MCF 10A (cell line): ENCODE measurements at regions of chr13 and their contacts with region 1.

Region 1: GRCh38 chr13:113816946-113817859 is 46.7 kb downstream of the GAS6 start:
- DNase-seq: peak; percentile 86
- H3K4me3 Mint-ChIP-seq: no peak overlapping the region
- H3K27ac Mint-ChIP-seq: no peak overlapping the region
- H3K4me1 Mint-ChIP-seq: peaks cover 41% of the 10 kb centered on the region
- H3K27me3 Mint-ChIP-seq: no peaks in the 10 kb centered on the region
- CTCF ChIP-seq: peak; percentile 83

Region 2: GRCh38 chr13:113837554-113838355 is 20.6 kb after region 1 on chr13:
- CTCF ChIA-PET with region 1: interaction called, 11 read pairs
- POLR2A ChIA-PET with region 1: interaction called, 45 read pairs
- intact Hi-C with region 1: loop called (anchors 1 kb)
- DNase-seq: peak; percentile 99
- H3K4me3 Mint-ChIP-seq: peak overlapping the region; percentile 75
- H3K27ac Mint-ChIP-seq: peak overlapping the region; percentile 100
- H3K4me1 Mint-ChIP-seq: peaks cover 21% of the 10 kb centered on the region
- H3K27me3 Mint-ChIP-seq: no peaks in the 10 kb centered on the region
- CTCF ChIP-seq: no peak

Region 3: DNA sequence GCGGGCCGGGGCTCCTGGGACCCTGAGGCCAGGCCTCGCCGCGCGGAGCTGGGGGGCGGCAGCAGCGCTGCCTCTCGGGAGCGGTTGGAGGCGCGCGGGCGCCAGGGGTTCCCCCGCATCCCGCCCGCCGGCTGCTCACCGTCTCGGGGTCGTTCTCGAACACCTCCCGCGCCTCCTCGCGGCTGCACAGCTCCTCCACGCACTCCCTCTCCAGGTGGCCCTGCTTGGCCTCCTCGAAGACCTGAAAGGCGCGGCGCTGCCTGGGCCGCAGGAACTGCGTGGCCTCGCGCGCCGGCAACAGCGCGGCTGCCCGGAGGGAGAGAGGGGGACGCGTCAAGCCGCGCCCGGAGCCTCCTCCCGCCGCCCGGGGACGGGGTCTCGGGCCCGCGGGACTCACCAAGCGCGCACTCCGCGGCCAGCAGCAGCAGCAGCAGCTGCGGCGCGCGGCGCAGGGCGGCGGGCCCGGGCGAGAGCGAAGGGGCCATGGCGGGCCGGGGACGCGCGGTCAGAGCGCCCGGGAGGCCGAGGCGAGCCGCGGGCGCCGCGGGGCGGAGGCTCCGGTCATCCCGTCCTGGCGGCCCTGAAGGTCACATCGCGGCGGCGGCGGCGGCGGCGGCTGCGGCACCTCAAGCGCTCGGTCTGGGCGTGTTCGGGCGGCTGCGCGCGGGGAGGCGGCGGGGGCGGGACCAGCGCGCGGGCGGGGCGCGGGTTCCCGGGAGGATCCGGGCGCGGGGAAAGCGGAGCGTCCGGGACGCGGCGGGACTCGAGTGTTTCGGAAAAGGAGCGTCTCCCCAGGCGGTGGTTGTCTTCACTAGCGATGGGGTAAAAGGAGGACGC is 46.5 kb after region 1 on chr13 and contains the start of gene GAS6:
- CTCF ChIA-PET with region 1: no interaction called
- POLR2A ChIA-PET with region 1: interaction called, 27 read pairs
- intact Hi-C with region 1: loop called (anchors 1 kb)
- DNase-seq: peak; percentile 41
- H3K4me3 Mint-ChIP-seq: peak within 1 kb of the TSS; percentile 68
- H3K27ac Mint-ChIP-seq: peak within 1 kb of the TSS; percentile 61
- H3K4me1 Mint-ChIP-seq: peaks cover 31% of the 10 kb centered on the region
- H3K27me3 Mint-ChIP-seq: no peaks in the 10 kb centered on the region
- CTCF ChIP-seq: peak; percentile 21
- total RNA-seq, gene GAS6: 58.9 and 92.3 TPM in 2 replicates

Region 4: DNA sequence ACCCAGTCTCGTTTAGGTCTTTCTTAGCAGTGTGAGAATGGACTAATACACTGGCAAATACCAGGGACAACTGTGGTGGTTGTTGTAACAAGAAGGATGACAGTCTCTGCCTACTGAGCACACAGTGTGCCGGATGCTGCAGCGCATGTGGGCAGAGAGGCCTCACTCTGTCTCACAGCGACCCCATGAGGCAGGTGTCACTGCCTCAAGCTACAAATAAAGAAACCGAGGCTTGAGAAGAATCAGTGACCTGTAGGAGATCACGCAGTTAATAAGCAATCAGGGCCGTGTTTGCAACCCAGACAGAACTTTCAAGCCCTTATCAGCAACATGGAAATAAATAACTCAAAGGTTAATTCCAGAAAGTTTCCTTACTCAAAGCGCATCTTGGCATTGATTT is 87.2 kb after region 1 on chr13:
- CTCF ChIA-PET with region 1: interaction called, 5 read pairs
- POLR2A ChIA-PET with region 1: no interaction called
- intact Hi-C with region 1: loop called (anchors 2 kb)
- DNase-seq: peak; percentile 75
- H3K4me3 Mint-ChIP-seq: no peak overlapping the region
- H3K27ac Mint-ChIP-seq: no peak overlapping the region
- H3K4me1 Mint-ChIP-seq: peaks cover 12% of the 10 kb centered on the region
- H3K27me3 Mint-ChIP-seq: no peaks in the 10 kb centered on the region
- CTCF ChIP-seq: peak; percentile 83

Region 5: DNA sequence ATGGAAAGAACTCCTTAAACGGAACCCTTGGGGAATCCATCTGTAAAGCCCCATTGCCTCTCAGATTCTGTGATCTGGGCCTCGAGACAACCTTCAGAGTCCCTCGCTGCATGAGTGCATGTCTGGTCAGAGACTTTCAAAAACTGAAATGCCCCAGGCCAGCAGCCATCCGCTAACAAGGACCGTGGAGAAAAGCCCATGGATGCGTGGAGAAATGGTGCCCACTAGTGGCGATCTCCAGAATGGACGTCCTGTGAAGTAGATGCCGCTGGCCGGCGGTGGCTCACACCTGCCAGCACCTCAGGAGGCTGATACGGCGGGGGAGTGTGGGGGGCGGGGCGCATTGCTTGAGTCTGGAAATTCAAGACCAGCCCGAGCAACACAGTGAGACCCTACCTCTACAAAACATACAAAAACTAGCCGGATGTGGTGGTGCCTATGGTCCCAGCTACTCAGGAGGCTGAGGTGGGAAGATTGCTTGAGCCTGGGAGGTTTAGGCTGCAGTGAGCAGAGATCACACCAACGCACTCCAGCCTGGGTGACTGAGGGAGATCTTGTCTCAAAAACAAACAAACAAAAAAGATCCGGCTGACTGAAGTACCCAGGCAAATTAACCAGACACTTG is 409.6 kb after region 1 on chr13:
- CTCF ChIA-PET with region 1: interaction called, 4 read pairs
- POLR2A ChIA-PET with region 1: interaction called, 4 read pairs
- intact Hi-C with region 1: loop called (anchors 2 kb)
- DNase-seq: peak; percentile 84
- H3K4me3 Mint-ChIP-seq: no peak overlapping the region
- H3K27ac Mint-ChIP-seq: no peak overlapping the region
- H3K4me1 Mint-ChIP-seq: peaks cover 6% of the 10 kb centered on the region
- H3K27me3 Mint-ChIP-seq: no peaks in the 10 kb centered on the region
- CTCF ChIP-seq: peak; percentile 96